ENCODE measurements at regions of chr12 and their contacts with region 1.

Region 1: DNA sequence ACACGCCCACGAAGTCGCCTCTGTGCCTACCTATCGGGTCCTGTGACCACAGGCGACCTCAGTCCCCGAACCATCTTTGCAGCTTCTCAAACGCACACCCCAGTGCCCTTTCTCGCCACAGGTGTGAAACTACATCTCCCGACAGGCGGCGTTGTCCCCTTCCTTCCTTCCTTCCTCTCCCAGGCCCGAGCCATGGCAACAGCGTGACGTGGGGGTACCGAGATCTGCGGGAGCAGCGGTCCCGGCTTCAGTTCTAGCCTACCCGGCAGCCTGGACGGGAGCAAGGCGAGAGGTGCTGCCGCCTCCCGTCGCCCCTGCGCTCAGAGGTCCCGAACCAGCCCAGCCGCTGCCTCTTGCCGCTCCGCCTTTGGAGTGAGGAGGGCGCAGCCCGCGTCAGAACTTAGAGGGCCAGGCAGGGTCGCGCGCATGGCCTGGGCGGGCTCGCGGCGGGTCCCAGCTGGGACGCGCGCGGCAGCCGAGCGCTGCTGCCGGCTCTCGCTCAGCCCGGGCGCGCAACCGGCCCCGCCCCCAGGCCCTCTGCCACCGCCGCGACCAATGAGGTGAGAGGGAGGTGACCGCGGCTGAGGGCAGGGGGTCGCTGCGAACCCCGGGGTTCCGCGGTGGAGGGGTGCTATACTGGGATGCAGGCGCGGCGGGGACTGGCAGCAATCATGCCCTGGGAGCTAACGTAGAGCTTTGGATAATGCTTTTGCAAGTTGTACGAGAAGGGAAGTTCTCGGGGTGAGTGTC is at the start of gene COQ10A:
- DNase-seq: peak; percentile 92

Region 2: DNA sequence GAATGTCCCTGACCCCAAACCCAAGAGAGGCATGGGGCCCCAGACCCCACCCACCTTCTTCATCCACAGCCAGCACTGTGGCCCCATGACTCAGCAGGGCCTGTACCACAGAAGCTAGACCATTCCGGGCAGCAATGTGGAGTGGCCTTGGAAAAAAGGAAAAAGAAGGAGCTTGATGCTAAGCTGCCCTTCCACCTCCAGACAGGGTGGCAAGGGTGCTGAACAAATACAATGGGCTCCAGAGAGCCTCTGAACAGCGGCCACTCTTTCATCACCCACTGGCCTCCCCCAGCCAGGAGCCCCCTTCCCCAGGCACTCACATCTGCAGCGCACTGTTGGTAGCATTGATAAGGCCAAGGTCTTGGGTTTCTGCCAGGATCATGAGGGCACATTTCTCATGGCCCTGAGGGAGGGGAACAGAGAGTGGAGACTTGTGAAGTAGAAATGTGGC is 23.1 kb before region 1 on chr12:
- CTCF ChIA-PET with region 1: no interaction called
- POLR2A ChIA-PET with region 1: no interaction called
- DNase-seq: no peak

Region 3: DNA sequence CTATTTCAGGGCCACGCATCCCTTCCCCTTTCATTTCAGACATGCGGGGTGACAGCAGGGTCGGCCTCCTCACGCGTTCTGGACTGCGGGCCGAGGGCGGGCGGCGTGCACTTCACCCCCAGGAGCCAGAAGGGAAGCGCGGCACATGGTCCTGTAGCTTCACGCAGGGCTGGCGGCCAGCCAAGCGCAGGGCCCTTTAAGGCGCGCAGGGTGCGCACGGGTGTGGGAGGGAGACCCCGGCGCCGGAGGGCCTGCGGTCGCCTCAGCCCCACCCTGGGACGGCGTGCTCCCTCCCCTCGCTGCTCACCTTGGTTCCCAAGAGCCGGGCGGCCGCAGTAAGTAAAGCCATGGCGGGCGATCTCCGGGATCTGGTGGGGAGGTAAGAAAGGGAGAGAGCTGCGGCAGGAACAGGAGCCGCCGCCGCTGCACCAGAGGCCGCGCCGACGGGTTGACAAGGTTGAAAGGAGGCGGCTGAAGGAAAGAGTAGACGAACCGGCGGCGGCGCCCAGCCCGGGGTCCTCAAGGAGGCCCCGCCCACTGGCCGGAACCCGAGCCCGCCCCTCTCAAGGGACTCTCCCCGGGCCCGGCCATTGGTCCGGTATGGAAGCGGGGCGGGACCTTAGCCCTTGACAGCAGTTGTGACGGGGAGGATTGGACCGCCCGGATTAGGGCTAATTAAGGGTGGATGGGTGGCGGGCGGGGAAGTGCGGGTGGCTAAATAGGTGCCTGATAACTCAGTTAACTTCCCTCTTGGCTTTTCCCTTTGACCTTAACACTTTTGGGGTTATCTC is 33.2 kb after region 1 on chr12 and contains the start of gene CS:
- CTCF ChIA-PET with region 1: interaction called, 3 read pairs
- POLR2A ChIA-PET with region 1: interaction called, 10 read pairs
- DNase-seq: peak; percentile 96

Region 4: DNA sequence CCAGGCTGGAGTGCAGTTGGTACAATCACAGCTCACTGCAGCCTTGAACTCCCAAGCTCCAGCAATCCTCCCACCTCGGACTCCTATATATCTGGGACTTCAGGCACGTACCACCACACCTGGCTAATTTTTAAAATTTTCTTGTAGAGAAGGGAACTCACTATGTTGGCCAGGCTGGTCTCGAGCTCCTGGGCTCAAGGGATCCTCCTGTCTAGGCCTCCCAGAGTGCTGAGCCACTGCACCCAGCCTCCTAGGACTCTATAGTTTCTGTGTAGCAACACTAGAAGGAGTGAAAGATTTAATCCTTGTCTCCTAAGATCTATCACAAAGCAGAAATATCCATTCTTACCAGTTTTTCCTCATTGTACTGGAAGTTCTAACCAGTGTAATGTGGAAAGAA is 100.1 kb after region 1 on chr12:
- CTCF ChIA-PET with region 1: no interaction called
- POLR2A ChIA-PET with region 1: no interaction called
- DNase-seq: no peak

Region 5: DNA sequence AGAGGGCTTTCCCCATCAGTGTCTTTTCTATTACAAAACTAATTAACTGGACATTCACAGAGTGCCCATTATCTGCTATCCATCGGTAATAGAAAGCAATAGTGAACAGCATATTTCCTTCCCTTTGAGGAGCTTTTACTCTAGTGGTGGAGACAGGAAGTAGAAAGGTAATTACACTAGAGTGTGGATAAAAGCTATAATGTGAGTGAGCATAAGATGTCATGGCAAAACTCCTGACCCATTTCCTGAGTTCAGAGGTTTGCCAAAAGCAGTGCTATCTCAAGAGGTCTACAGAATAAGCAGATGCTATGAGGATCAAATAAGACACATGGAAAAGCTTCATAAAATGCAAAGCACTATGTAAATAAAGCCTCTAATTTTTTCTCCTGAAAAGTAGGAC is 158.3 kb after region 1 on chr12:
- CTCF ChIA-PET with region 1: no interaction called
- POLR2A ChIA-PET with region 1: no interaction called
- DNase-seq: no peak

Measured in HEK293T (cell line).